PC-3 (cell line): ENCODE measurements at regions of chr3 and their contacts with region 1.

Region 1: GRCh38 chr3:9249273-9250192 is at the start of gene SRGAP3:
- DNase-seq: peak; percentile 97
- ATAC-seq: peak; percentile 93
- H3K4me3 ChIP-seq: peak within 1 kb of the TSS; percentile 77
- H3K27ac ChIP-seq: peak within 1 kb of the TSS; percentile 39
- H3K4me1 ChIP-seq: peaks cover 45% of the 10 kb centered on the region
- H3K27me3 ChIP-seq: no peaks in the 10 kb centered on the region
- CTCF ChIP-seq: peak; percentile 32; the same call in 1 of the 2 replicates
- total RNA-seq, gene SRGAP3: 7.5 and 9.6 TPM in 2 replicates

Region 2: DNA sequence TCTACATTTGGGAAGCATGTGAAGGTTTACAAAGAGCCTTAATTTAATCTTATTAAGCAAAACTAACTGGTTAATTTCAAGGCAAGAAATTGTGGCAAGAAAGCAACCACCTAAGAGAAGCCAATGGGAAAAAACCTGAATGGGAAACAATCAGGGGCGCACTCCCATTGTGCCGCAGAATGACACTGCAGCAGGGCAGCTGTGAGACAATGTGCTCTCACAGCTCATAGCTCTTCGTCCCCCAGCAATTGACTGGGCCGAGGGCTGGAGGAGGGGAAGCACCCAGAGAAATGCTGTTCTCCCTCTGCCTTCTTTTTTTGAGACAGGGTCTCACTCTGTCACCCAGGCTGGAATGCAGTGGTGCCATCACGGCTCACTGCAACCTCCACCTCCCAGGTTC is 193.0 kb before region 1 on chr3:
- CTCF ChIA-PET with region 1: no interaction called
- POLR2A ChIA-PET with region 1: interaction called, 21 read pairs
- intact Hi-C with region 1: no loop called
- DNase-seq: no peak
- ATAC-seq: no peak
- H3K4me3 ChIP-seq: no peak overlapping the region
- H3K27ac ChIP-seq: no peak overlapping the region
- H3K4me1 ChIP-seq: no peaks in the 10 kb centered on the region
- H3K27me3 ChIP-seq: no peaks in the 10 kb centered on the region
- CTCF ChIP-seq: no peak

Region 3: DNA sequence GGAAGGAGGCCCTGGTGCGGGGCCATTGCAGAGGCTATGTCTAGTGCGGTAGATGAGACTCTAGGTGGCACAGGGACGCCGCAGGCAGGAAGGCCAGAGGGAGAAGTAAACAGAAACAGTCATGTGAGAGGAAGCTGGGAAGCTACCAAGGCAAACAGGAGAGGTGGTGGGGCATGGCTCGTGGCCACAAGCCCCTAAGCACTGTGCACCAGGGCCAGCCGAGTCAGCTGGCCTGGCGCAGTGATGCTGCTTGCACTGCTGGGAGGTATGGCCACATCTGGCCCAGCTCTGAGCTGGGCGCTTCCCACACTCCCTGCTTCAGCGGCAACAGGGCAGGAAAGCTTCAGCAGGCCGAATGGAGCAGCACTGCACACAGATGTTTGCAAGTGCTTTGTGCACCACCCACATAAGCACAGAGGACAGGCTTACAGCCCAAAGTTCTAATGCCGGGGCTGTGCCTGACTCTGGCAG is 76.6 kb before region 1 on chr3:
- CTCF ChIA-PET with region 1: interaction called, 6 read pairs
- POLR2A ChIA-PET with region 1: no interaction called
- intact Hi-C with region 1: loop called (anchors 1 kb)
- DNase-seq: peak; percentile 87
- ATAC-seq: peak; percentile 78
- H3K4me3 ChIP-seq: no peak overlapping the region
- H3K27ac ChIP-seq: peak overlapping the region; percentile 8; the same call in 1 of the 2 replicates
- H3K4me1 ChIP-seq: peaks cover 32% of the 10 kb centered on the region
- H3K27me3 ChIP-seq: no peaks in the 10 kb centered on the region
- CTCF ChIP-seq: peak; percentile 48; the same call in 1 of the 2 replicates

Region 4: GRCh38 chr3:9214599-9214998 is 34.9 kb before region 1 on chr3:
- CTCF ChIA-PET with region 1: no interaction called
- POLR2A ChIA-PET with region 1: interaction called, 5 read pairs
- intact Hi-C with region 1: loop called (anchors 2 kb)
- DNase-seq: peak; percentile 82
- ATAC-seq: peak; percentile 90
- H3K4me3 ChIP-seq: peak overlapping the region; percentile 55
- H3K27ac ChIP-seq: peak overlapping the region; percentile 95
- H3K4me1 ChIP-seq: peaks cover 41% of the 10 kb centered on the region
- H3K27me3 ChIP-seq: no peaks in the 10 kb centered on the region
- CTCF ChIP-seq: no peak

Region 5: GRCh38 chr3:9291821-9292410 is 42.4 kb after region 1 on chr3:
- CTCF ChIA-PET with region 1: no interaction called
- POLR2A ChIA-PET with region 1: interaction called, 3 read pairs
- intact Hi-C with region 1: loop called (anchors 2 kb)
- DNase-seq: no peak
- ATAC-seq: no peak
- H3K4me3 ChIP-seq: no peak overlapping the region
- H3K27ac ChIP-seq: no peak overlapping the region
- H3K4me1 ChIP-seq: peaks cover 9% of the 10 kb centered on the region
- H3K27me3 ChIP-seq: no peaks in the 10 kb centered on the region
- CTCF ChIP-seq: no peak

Region 6: GRCh38 chr3:9352917-9353752 is 103.6 kb after region 1 on chr3:
- CTCF ChIA-PET with region 1: interaction called, 4 read pairs
- POLR2A ChIA-PET with region 1: interaction called, 3 read pairs
- intact Hi-C with region 1: loop called (anchors 5 kb)
- DNase-seq: peak; percentile 80
- ATAC-seq: peak; percentile 52
- H3K4me3 ChIP-seq: peak overlapping the region; percentile 17; the same call in 1 of the 2 replicates
- H3K27ac ChIP-seq: peak overlapping the region; percentile 98
- H3K4me1 ChIP-seq: peaks cover 75% of the 10 kb centered on the region
- H3K27me3 ChIP-seq: no peaks in the 10 kb centered on the region
- CTCF ChIP-seq: peak; percentile 99